ENCODE measurements at regions of chr3 and their contacts with region 1.

Region 1: GRCh38 chr3:88003115-88003755 is 55.6 kb downstream of the CGGBP1 start:
- DNase-seq: peak in 1 of 2 donors; percentile 56
- ATAC-seq: no peak
- H3K4me3 ChIP-seq: no peak overlapping the region
- H3K4me3 Mint-ChIP-seq: no peak overlapping the region
- H3K27ac ChIP-seq: no peak overlapping the region
- H3K27ac Mint-ChIP-seq: no peak overlapping the region
- H3K4me1 ChIP-seq: no peaks in the 10 kb centered on the region
- H3K4me1 Mint-ChIP-seq: peaks cover 6 to 12% of the 10 kb centered on the region in 2 donors
- H3K27me3 ChIP-seq: no peaks in the 10 kb centered on the region
- H3K27me3 Mint-ChIP-seq: peaks cover 0 to 9% of the 10 kb centered on the region in 2 donors
- CTCF ChIP-seq: peak; percentile 69

Region 2: GRCh38 chr3:87260270-87260669 is 743.0 kb before region 1 on chr3:
- intact Hi-C with region 1: loop called (anchors 10 kb)
- DNase-seq: peak in 1 of 2 donors; percentile 65
- ATAC-seq: peak in 2 of 3 donors; percentile 63 to 66
- H3K4me3 ChIP-seq: no peak overlapping the region
- H3K4me3 Mint-ChIP-seq: no peak overlapping the region
- H3K27ac ChIP-seq: no peak overlapping the region
- H3K27ac Mint-ChIP-seq: no peak overlapping the region
- H3K4me1 ChIP-seq: no peaks in the 10 kb centered on the region
- H3K4me1 Mint-ChIP-seq: peaks cover 0 to 7% of the 10 kb centered on the region in 2 donors
- H3K27me3 ChIP-seq: no peaks in the 10 kb centered on the region
- H3K27me3 Mint-ChIP-seq: no peaks in the 10 kb centered on the region
- CTCF ChIP-seq: peak; percentile 74

Region 3: GRCh38 chr3:87298111-87298718 is 705.0 kb before region 1 on chr3:
- intact Hi-C with region 1: loop called (anchors 1 kb)
- DNase-seq: peak in 1 of 2 donors; percentile 58
- ATAC-seq: peak; percentile 46 to 67 (median 64)
- H3K4me3 ChIP-seq: no peak overlapping the region
- H3K4me3 Mint-ChIP-seq: no peak overlapping the region
- H3K27ac ChIP-seq: no peak overlapping the region
- H3K27ac Mint-ChIP-seq: no peak overlapping the region
- H3K4me1 ChIP-seq: no peaks in the 10 kb centered on the region
- H3K4me1 Mint-ChIP-seq: no peaks in the 10 kb centered on the region
- H3K27me3 ChIP-seq: no peaks in the 10 kb centered on the region
- H3K27me3 Mint-ChIP-seq: no peaks in the 10 kb centered on the region
- CTCF ChIP-seq: peak; percentile 80

Region 4: GRCh38 chr3:87350364-87351199 is 652.7 kb before region 1 on chr3:
- intact Hi-C with region 1: loop called (anchors 1 kb)
- DNase-seq: peak in 1 of 2 donors; percentile 71
- ATAC-seq: peak; percentile 90 to 95 (median 91)
- H3K4me3 ChIP-seq: no peak overlapping the region
- H3K4me3 Mint-ChIP-seq: no peak overlapping the region
- H3K27ac ChIP-seq: no peak overlapping the region
- H3K27ac Mint-ChIP-seq: no peak overlapping the region
- H3K4me1 ChIP-seq: no peaks in the 10 kb centered on the region
- H3K4me1 Mint-ChIP-seq: no peaks in the 10 kb centered on the region
- H3K27me3 ChIP-seq: no peaks in the 10 kb centered on the region
- H3K27me3 Mint-ChIP-seq: peaks cover 0 to 5% of the 10 kb centered on the region in 2 donors
- CTCF ChIP-seq: peak; percentile 95

Region 5: GRCh38 chr3:87771341-87772192 is 231.7 kb before region 1 on chr3:
- intact Hi-C with region 1: loop called (anchors 1 kb)
- DNase-seq: peak in 1 of 2 donors; percentile 67
- ATAC-seq: peak; percentile 61 to 80 (median 76)
- H3K4me3 ChIP-seq: no peak overlapping the region
- H3K4me3 Mint-ChIP-seq: no peak overlapping the region
- H3K27ac ChIP-seq: no peak overlapping the region
- H3K27ac Mint-ChIP-seq: no peak overlapping the region
- H3K4me1 ChIP-seq: no peaks in the 10 kb centered on the region
- H3K4me1 Mint-ChIP-seq: no peaks in the 10 kb centered on the region
- H3K27me3 ChIP-seq: no peaks in the 10 kb centered on the region
- H3K27me3 Mint-ChIP-seq: peaks cover 0 to 8% of the 10 kb centered on the region in 2 donors
- CTCF ChIP-seq: peak; percentile 55

Region 6: GRCh38 chr3:87805670-87806069 is 197.6 kb before region 1 on chr3:
- intact Hi-C with region 1: no loop called
- DNase-seq: no peak
- ATAC-seq: no peak
- H3K4me3 ChIP-seq: no peak overlapping the region
- H3K4me3 Mint-ChIP-seq: no peak overlapping the region
- H3K27ac ChIP-seq: no peak overlapping the region
- H3K27ac Mint-ChIP-seq: no peak overlapping the region
- H3K4me1 ChIP-seq: no peaks in the 10 kb centered on the region
- H3K4me1 Mint-ChIP-seq: peaks cover 9 to 14% of the 10 kb centered on the region in 2 donors
- H3K27me3 ChIP-seq: no peaks in the 10 kb centered on the region
- H3K27me3 Mint-ChIP-seq: no peaks in the 10 kb centered on the region
- CTCF ChIP-seq: no peak